Activated CD4-positive, alpha-beta memory T cell treated with anti-CD3 and anti-CD28 coated beads, Interleukin-2, amount 10 ng/mL, durations not matched to agents 7 days and 5 days (primary cell): ENCODE measurements at regions of chr17 and their contacts with region 1.

Region 1: DNA sequence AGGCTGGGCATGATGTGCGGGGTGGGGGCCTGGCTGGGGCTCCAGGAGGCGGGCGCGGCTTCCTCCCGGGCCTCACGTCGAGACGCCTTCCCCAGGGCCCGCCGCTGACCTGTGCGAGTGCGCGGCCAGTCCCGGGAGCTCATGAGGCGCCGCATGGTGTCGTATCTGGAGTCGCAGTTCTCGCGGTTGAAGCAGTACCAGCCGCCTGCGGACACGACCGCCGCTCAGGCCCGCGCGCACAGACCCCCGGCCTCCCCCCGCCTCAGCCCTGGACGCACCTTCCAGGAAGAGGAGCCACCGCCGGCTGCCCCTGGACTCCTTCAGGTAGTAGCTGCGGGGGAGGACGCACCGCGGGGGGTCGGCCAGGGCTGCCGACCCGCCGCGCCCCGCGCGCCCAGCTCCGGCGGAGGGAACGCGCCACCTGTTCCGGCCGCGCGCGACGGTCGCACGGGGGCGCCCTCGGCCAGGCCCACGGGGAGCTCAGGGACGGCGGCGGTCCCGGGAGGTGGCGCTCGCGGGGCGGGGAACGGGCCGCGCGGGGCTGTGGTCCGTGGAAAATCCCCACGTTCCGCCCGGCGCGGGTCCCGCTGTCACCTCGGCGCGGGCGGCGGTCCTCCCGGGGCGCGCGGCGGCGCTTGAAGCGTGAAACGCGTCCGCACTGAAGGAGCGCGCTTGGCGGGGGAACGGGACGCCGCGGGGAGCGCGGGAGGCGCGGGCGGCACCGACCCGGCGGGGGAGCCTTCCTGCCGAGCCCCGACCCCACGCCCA is 1.4 kb downstream of the NOTUM start:
- DNase-seq: peak; percentile 79
- H3K4me3 Mint-ChIP-seq: no peak overlapping the region
- H3K27ac Mint-ChIP-seq: no peak overlapping the region
- H3K4me1 Mint-ChIP-seq: peaks cover 4% of the 10 kb centered on the region
- H3K27me3 Mint-ChIP-seq: peaks cover 38% of the 10 kb centered on the region

Region 2: GRCh38 chr17:81995463-81996231 is 36.1 kb after region 1 on chr17:
- CTCF ChIA-PET with region 1: interaction called, 11 read pairs
- POLR2A ChIA-PET with region 1: no interaction called
- DNase-seq: no peak
- H3K4me3 Mint-ChIP-seq: no peak overlapping the region
- H3K27ac Mint-ChIP-seq: no peak overlapping the region
- H3K4me1 Mint-ChIP-seq: no peaks in the 10 kb centered on the region
- H3K27me3 Mint-ChIP-seq: no peaks in the 10 kb centered on the region

Region 3: GRCh38 chr17:82022981-82023374 is 63.4 kb after region 1 on chr17 and contains the start of gene LRRC45:
- CTCF ChIA-PET with region 1: interaction called, 73 read pairs
- POLR2A ChIA-PET with region 1: interaction called, 30 read pairs
- DNase-seq: peak; percentile 100
- H3K4me3 Mint-ChIP-seq: peak within 1 kb of the TSS; percentile 82
- H3K27ac Mint-ChIP-seq: peak within 1 kb of the TSS; percentile 60
- H3K4me1 Mint-ChIP-seq: peaks cover 42% of the 10 kb centered on the region
- H3K27me3 Mint-ChIP-seq: no peaks in the 10 kb centered on the region
- total RNA-seq, gene LRRC45: 34.8 to 35.5 TPM